Activated CD8-positive, alpha-beta T cell treated with anti-CD3 and anti-CD28 coated beads for 36 hours (primary cell): ENCODE measurements at regions of chr4 and their contacts with region 1.

Region 1: DNA sequence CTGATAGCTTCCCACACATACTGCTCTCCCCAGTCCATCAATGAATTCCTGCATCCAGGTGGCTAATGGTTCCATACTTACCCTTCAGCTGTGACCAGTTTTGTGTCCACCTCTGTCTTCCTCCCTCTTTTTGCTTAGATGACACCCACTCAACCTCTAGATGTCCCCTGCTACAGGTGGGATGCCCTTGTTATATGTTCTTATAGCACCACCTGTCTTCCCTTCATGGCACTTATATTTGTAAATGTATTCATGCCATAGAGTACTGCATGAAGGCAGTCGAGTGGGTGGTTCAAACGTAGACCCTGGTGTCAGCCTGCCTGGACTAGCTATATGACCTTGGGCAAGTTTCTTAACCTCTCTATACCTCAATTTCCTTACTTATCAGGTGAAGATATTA is 6.5 kb upstream of the USP46 start:
- DNase-seq: peak; percentile 10
- ATAC-seq: peak; percentile 68
- H3K4me3 Mint-ChIP-seq: no peak overlapping the region
- H3K27ac Mint-ChIP-seq: no peak overlapping the region
- H3K4me1 Mint-ChIP-seq: peaks cover 3% of the 10 kb centered on the region
- H3K27me3 Mint-ChIP-seq: peaks cover 29% of the 10 kb centered on the region
- CTCF ChIP-seq: no peak

Region 2: DNA sequence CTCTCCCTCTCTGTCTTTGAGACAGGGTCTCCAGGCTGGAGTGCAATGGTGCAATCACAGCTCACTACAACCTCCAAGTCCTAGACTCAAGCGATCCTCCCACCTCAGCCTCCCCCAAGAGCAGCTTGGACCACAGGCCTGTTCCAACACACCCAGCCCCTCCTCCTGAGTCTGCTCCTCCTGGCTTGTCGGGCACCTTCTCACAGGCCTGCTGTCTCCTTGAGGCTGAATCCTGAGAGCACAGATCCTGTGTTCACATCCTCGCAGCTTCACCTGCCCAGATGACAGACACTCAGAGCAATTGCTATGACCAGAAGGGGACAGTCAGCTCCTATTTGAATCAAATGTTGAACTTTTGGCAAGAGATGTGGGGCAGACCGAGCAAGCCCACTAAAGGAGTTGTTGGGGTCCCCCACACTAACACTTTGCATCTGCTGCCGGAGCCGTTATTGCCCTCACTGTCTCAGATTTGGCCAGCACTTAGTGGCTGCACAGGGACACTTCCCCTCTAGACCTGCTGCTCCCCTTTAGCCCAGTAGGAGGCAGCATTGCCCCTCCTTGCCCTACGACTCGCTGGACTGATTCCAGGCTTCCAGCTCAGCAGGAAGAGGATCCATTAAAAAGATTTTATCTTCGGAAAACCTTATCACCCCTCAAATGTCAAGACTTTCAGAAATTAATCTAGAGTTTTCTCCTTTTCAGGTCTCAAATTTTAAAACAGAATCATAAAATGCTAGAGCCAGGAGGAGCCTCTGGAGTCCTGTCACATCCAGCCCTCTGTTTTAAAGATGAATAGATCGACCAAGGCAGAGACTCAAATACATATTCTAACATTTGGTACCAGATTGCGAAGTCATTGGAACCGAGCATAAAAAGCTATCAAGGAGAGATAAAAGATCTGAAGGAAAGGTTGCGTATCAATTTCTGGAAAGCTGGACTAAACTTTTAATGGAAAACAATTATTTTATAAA is 120.2 kb before region 1 on chr4:
- CTCF ChIA-PET with region 1: interaction called, 15 read pairs
- POLR2A ChIA-PET with region 1: no interaction called
- intact Hi-C with region 1: loop called (anchors 5 kb)
- DNase-seq: peak; percentile 62
- ATAC-seq: peak; percentile 64
- H3K4me3 Mint-ChIP-seq: no peak overlapping the region
- H3K27ac Mint-ChIP-seq: no peak overlapping the region
- H3K4me1 Mint-ChIP-seq: no peaks in the 10 kb centered on the region
- H3K27me3 Mint-ChIP-seq: peaks cover 2% of the 10 kb centered on the region
- CTCF ChIP-seq: peak; percentile 83

Region 3: DNA sequence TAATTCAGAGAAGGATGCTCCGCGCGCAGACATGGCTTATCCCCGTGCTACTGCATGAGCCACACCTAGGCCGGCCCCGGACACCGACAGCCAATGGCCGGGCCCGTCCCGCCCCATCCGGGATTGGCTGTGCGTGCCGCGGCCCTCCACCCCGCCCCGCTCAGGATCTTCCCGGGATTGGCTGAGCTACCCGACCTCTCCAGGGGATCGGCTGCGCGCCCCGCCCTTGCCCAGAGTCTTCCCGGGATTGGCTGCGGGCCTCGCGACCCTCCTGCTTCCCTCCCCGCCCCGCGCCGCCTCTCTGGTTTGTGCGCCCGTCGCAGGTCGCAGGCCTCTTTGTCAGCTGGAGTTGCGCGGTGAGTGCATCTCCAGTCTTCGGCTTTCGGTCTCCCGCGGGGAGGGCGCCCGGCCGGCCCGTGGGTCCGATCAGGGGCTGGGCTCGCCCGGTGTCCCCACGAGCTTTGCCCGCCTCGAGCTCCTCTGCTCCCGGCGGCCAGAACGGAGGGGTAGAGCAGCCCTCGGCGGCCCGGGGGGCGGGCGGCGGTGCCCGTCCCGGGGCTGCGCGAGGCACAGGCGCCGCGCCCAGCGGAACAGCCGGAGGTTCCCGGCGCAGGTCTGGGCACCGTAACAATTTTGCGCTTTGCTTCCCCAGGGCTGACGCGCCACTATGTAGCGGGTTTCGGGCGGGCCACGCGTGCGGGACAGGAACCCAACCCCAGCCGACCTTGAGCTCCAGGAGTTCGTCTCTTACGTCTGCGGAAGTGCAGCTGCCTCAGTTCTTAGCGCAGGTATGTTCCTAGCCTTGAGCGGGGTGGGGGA is 46.8 kb after region 1 on chr4:
- CTCF ChIA-PET with region 1: no interaction called
- POLR2A ChIA-PET with region 1: no interaction called
- intact Hi-C with region 1: no loop called
- DNase-seq: peak; percentile 98
- ATAC-seq: peak; percentile 96
- H3K4me3 Mint-ChIP-seq: peak overlapping the region; percentile 96
- H3K27ac Mint-ChIP-seq: peak overlapping the region; percentile 98
- H3K4me1 Mint-ChIP-seq: peaks cover 38% of the 10 kb centered on the region
- H3K27me3 Mint-ChIP-seq: no peaks in the 10 kb centered on the region
- CTCF ChIP-seq: no peak

Region 4: GRCh38 chr4:52788511-52789205 is 123.1 kb after region 1 on chr4:
- CTCF ChIA-PET with region 1: no interaction called
- POLR2A ChIA-PET with region 1: no interaction called
- intact Hi-C with region 1: no loop called
- DNase-seq: no peak
- ATAC-seq: no peak
- H3K4me3 Mint-ChIP-seq: no peak overlapping the region
- H3K27ac Mint-ChIP-seq: no peak overlapping the region
- H3K4me1 Mint-ChIP-seq: no peaks in the 10 kb centered on the region
- H3K27me3 Mint-ChIP-seq: no peaks in the 10 kb centered on the region
- CTCF ChIP-seq: no peak

Region 5: GRCh38 chr4:52824603-52825459 is 159.2 kb after region 1 on chr4:
- CTCF ChIA-PET with region 1: no interaction called
- POLR2A ChIA-PET with region 1: no interaction called
- intact Hi-C with region 1: no loop called
- DNase-seq: peak; percentile 9
- ATAC-seq: peak; percentile 22
- H3K4me3 Mint-ChIP-seq: no peak overlapping the region
- H3K27ac Mint-ChIP-seq: no peak overlapping the region
- H3K4me1 Mint-ChIP-seq: peaks cover 33% of the 10 kb centered on the region
- H3K27me3 Mint-ChIP-seq: no peaks in the 10 kb centered on the region
- CTCF ChIP-seq: no peak